Activated CD4-positive, alpha-beta T cell treated with anti-CD3 and anti-CD28 coated beads for 36 hours (primary cell): ENCODE measurements at regions of chr5 and their contacts with region 1.

Region 1: GRCh38 chr5:139560752-139561654 is at the start of gene UBE2D2:
- DNase-seq: peak; percentile 99
- ATAC-seq: peak; percentile 89
- H3K4me3 Mint-ChIP-seq: peak within 1 kb of the TSS; percentile 99
- H3K27ac Mint-ChIP-seq: peak within 1 kb of the TSS; percentile 99
- H3K4me1 Mint-ChIP-seq: peaks cover 27% of the 10 kb centered on the region
- H3K27me3 Mint-ChIP-seq: no peaks in the 10 kb centered on the region
- total RNA-seq, gene UBE2D2: 262 to 289 TPM

Region 2: GRCh38 chr5:138575194-138576015 is 985.6 kb before region 1 on chr5 and contains the start of gene HSPA9:
- CTCF ChIA-PET with region 1: no interaction called
- POLR2A ChIA-PET with region 1: no interaction called
- intact Hi-C with region 1: loop called in 1 of 2 experiments (anchors 1 kb)
- DNase-seq: peak; percentile 98
- ATAC-seq: peak; percentile 89
- H3K4me3 Mint-ChIP-seq: peak within 1 kb of the TSS; percentile 96
- H3K27ac Mint-ChIP-seq: peak within 1 kb of the TSS; percentile 99
- H3K4me1 Mint-ChIP-seq: peaks cover 43% of the 10 kb centered on the region
- H3K27me3 Mint-ChIP-seq: no peaks in the 10 kb centered on the region
- total RNA-seq, gene HSPA9: 431 to 466 TPM

Region 3: GRCh38 chr5:138654281-138654867 is 906.6 kb before region 1 on chr5:
- CTCF ChIA-PET with region 1: no interaction called
- POLR2A ChIA-PET with region 1: no interaction called
- intact Hi-C with region 1: no loop called
- DNase-seq: peak; percentile 81
- ATAC-seq: peak; percentile 97
- H3K4me3 Mint-ChIP-seq: no peak overlapping the region
- H3K27ac Mint-ChIP-seq: peak overlapping the region; percentile 28
- H3K4me1 Mint-ChIP-seq: peaks cover 24% of the 10 kb centered on the region
- H3K27me3 Mint-ChIP-seq: peaks cover 72% of the 10 kb centered on the region

Region 4: GRCh38 chr5:139392678-139393496 is 168.1 kb before region 1 on chr5:
- CTCF ChIA-PET with region 1: no interaction called
- POLR2A ChIA-PET with region 1: no interaction called
- intact Hi-C with region 1: loop called in 1 of 2 experiments (anchors 1 kb)
- DNase-seq: peak; percentile 93
- ATAC-seq: peak; percentile 67
- H3K4me3 Mint-ChIP-seq: peak overlapping the region; percentile 78
- H3K27ac Mint-ChIP-seq: peak overlapping the region; percentile 85
- H3K4me1 Mint-ChIP-seq: peaks cover 40% of the 10 kb centered on the region
- H3K27me3 Mint-ChIP-seq: no peaks in the 10 kb centered on the region

Region 5: DNA sequence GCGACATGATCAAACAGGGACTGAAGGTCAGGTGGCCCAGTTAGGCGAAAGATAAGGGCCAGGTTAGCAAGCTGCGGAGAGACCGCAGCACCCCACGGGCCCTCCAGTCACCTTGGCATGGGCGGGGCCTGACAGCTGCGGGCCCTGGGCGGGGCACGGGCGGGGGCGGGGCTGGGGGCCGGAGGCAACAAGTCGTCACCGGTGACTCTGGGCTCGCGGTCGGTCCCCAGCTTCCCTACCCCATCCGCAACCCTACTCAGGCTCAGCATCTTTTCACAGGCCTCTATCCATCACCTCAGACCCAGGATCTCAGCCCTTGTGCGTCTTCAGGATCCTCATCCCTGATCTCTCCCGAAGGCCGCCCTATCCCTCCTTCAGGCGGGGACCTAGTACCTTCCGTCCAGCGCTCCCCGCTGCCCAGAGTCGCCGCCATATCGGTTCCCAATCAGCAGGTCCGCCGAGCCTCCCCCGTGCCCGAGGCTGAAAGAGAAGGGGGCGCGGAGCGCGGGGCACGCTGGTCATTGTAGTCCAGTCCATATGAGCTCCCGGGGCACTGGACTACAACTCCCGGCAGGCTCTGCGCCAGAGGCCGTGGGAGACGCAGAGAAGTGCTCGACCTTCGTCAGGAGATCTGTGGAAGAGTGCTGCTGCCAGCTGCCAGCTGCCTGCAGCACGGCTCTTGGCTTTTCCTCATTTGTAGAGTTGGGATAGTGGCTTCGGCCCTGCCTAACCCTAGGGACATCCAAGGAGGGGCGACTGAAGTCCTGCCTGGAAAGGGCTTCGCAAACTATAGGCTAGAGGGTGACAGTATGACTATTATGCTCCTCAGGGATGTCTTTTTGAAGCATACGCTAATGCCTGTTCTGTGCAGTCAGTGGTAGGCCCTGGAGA is 121.7 kb before region 1 on chr5 and contains the start of gene DNAJC18:
- CTCF ChIA-PET with region 1: no interaction called
- POLR2A ChIA-PET with region 1: interaction called, 6 read pairs
- intact Hi-C with region 1: loop called in 1 of 2 experiments (anchors 1 kb)
- DNase-seq: peak; percentile 97
- ATAC-seq: peak; percentile 86
- H3K4me3 Mint-ChIP-seq: peak within 1 kb of the TSS; percentile 94
- H3K27ac Mint-ChIP-seq: peak within 1 kb of the TSS; percentile 99
- H3K4me1 Mint-ChIP-seq: peaks cover 55% of the 10 kb centered on the region
- H3K27me3 Mint-ChIP-seq: no peaks in the 10 kb centered on the region
- total RNA-seq, gene DNAJC18: 33.1 to 35.6 TPM

Region 6: DNA sequence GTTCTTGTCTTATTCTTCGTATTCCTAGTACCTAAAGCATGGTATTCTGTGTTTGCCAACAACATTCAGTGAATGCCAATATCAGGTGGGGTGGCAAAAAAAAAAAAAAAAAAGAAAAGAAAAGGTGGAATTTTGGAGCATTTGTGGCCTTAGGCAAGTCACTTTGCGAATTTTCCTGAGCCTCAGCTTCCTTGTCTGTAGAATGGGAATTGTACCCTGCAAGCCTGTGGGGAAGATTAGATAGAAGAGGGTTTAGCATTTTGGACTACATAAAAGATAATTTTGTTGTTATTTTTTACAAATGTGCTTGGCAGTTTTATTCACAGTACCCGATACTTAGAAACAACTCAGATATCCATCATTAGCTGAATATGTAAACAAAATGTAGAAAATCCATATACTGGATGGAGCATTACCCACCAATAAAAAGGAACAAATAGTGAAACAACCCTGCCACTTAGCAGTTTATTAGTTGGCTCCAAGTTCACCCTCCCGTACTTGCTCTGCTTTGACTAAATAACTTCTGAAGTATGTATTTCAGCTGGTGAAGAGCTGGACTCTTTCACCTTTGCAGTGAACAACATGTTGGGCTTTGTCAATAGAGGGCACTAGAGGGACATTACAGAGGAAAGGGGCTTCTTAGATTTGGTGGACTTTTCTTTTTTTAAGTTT is 13.8 kb after region 1 on chr5:
- CTCF ChIA-PET with region 1: interaction called, 63 read pairs
- POLR2A ChIA-PET with region 1: interaction called, 40 read pairs
- intact Hi-C with region 1: loop called (anchors 1 kb)
- DNase-seq: no peak
- ATAC-seq: peak; percentile 23
- H3K4me3 Mint-ChIP-seq: no peak overlapping the region
- H3K27ac Mint-ChIP-seq: no peak overlapping the region
- H3K4me1 Mint-ChIP-seq: peaks cover 79% of the 10 kb centered on the region
- H3K27me3 Mint-ChIP-seq: no peaks in the 10 kb centered on the region

Region 7: DNA sequence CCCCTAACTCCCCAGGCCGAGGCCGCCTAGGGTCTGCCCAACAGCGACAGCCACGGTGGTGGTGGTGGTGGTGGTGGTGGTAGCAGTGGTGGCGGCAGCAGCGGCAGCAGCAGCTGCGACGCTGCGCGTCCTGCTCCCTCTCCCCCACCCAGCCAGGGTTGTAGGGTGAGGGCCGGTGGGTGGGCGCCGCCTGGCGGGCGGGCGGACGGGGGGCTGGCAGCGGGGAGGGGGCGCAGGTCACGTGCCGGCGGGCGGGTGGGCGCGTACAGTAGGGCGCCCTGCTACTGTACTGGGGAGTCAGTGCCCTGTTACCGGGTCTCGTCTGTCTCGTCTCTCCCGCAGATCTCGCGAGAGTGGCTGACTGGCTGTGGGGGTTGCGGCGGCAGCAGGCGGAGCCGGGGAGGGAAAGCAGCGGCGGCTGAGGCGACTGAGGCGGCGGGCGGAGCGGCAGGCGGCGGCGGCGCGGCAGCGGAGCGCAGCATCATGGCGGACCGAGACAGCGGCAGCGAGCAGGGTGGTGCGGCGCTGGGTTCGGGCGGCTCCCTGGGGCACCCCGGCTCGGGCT is 552.8 kb after region 1 on chr5 and contains the start of gene PURA:
- CTCF ChIA-PET with region 1: no interaction called
- POLR2A ChIA-PET with region 1: no interaction called
- intact Hi-C with region 1: loop called (anchors 5 to 10 kb)
- DNase-seq: peak; percentile 98
- ATAC-seq: peak; percentile 92
- H3K4me3 Mint-ChIP-seq: peak within 1 kb of the TSS; percentile 89
- H3K27ac Mint-ChIP-seq: peak within 1 kb of the TSS; percentile 84
- H3K4me1 Mint-ChIP-seq: peaks cover 65% of the 10 kb centered on the region
- H3K27me3 Mint-ChIP-seq: peaks cover 3% of the 10 kb centered on the region
- total RNA-seq, gene PURA: 9.5 to 10.7 TPM

Region 8: DNA sequence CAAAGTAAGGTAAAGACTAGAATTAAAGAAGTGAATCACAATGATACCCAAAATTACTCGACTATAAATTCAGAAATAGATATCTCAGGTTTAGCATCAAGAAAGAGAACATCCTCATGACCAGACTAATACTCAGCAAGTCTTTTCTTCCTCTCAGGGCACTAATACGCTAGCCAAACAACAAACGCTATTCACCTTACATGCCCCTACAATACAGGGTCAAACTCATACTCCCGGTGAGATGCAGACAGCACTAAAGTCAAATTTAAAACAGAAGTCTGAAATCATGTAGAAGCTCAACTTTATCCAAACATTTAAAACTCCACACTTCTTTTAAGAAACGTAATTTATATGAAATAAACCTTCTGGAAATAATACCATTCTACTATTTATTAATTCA is 736.3 kb after region 1 on chr5:
- CTCF ChIA-PET with region 1: no interaction called
- POLR2A ChIA-PET with region 1: no interaction called
- intact Hi-C with region 1: no loop called
- DNase-seq: no peak
- ATAC-seq: no peak
- H3K4me3 Mint-ChIP-seq: no peak overlapping the region
- H3K27ac Mint-ChIP-seq: no peak overlapping the region
- H3K4me1 Mint-ChIP-seq: peaks cover 67% of the 10 kb centered on the region
- H3K27me3 Mint-ChIP-seq: no peaks in the 10 kb centered on the region